MCF 10A (cell line): ENCODE measurements at regions of chr1 and their contacts with region 1.

Region 1: DNA sequence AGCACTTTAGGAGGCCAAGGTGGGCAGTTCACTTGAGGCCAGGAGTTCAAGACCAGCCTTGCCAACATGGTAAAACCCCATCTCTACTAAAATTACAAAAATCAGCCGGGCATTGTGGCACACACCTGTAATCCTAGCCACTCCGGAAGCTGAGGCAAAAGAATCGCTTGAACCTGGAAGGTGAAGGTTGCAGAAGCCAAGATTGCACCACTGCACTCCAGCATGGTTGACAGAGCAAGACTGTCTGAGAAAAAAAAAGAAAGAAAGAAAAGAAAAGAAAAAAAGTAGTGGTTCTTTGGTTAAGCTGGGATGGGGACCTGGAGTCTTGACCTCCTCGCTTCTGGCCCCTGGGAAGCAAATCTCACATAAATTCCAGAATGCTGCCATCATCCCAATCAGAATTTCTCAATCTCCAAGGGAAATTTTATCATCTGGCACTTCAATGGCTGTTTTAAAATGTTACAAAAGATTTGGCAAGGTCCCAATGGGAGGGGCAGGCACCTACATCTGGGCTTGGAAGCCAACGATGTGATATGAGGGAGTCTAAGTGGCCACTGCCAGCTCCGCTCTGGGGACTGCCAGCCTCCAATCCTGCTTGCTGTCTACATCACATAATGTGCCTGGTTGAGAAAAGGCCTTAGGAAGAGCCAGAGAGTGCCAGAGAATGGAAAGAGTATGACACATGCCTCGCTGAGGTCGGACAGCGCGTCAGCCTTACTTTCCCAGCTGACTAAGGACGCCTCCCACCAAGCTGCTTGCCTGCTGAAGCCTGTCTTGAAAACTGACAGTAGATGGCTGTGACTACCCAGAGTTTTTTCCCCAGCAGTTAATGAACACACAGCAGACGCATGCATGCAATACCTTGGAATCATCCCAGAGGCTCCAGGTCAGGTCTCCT is 42.1 kb upstream of the SRP9 start:
- DNase-seq: peak; percentile 100
- H3K4me3 Mint-ChIP-seq: peak overlapping the region; percentile 60
- H3K27ac Mint-ChIP-seq: peak overlapping the region; percentile 89
- H3K4me1 Mint-ChIP-seq: peaks cover 33% of the 10 kb centered on the region
- H3K27me3 Mint-ChIP-seq: no peaks in the 10 kb centered on the region
- CTCF ChIP-seq: peak; percentile 9

Region 2: GRCh38 chr1:225454733-225455132 is 280.8 kb before region 1 on chr1:
- CTCF ChIA-PET with region 1: no interaction called
- POLR2A ChIA-PET with region 1: interaction called, 14 read pairs
- intact Hi-C with region 1: no loop called
- DNase-seq: peak; percentile 96
- H3K4me3 Mint-ChIP-seq: peak overlapping the region; percentile 2
- H3K27ac Mint-ChIP-seq: peak overlapping the region; percentile 60
- H3K4me1 Mint-ChIP-seq: peaks cover 61% of the 10 kb centered on the region
- H3K27me3 Mint-ChIP-seq: no peaks in the 10 kb centered on the region
- CTCF ChIP-seq: no peak

Region 3: DNA sequence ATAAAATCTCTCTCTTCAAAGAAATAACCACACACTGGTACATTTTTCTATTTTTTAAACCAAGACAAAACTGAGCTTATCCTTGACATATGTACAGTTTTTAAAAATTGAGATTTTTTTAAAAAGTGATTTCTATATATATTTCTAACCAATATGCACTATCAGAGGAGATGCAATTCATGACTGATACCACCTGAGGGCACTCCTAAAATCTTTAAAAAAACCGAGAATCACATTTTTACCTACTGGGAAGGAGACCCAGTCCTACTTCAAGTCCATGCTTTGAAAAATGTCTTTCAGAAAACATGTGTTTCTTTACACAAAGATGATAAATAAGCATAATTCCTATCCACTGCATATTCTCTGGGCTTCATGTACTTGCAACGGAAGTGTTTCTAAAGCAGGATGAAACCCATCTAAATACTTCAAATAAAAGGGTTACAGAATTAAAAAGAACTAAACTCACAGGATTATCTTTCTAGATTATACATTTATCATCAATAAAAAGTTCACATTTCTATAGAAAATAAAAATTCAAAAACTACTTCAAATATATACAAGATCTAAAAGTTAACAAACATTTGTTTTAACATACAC is 181.2 kb before region 1 on chr1:
- CTCF ChIA-PET with region 1: interaction called, 5 read pairs
- POLR2A ChIA-PET with region 1: interaction called, 5 read pairs
- intact Hi-C with region 1: loop called (anchors 1 kb)
- DNase-seq: peak; percentile 67
- H3K4me3 Mint-ChIP-seq: no peak overlapping the region
- H3K27ac Mint-ChIP-seq: no peak overlapping the region
- H3K4me1 Mint-ChIP-seq: peaks cover 2% of the 10 kb centered on the region
- H3K27me3 Mint-ChIP-seq: no peaks in the 10 kb centered on the region
- CTCF ChIP-seq: peak; percentile 85

Region 4: GRCh38 chr1:225700164-225700740 is 35.2 kb before region 1 on chr1:
- CTCF ChIA-PET with region 1: interaction called, 7 read pairs
- POLR2A ChIA-PET with region 1: interaction called, 118 read pairs
- intact Hi-C with region 1: loop called (anchors 5 kb)
- DNase-seq: peak; percentile 100
- H3K4me3 Mint-ChIP-seq: peak overlapping the region; percentile 68
- H3K27ac Mint-ChIP-seq: peak overlapping the region; percentile 94
- H3K4me1 Mint-ChIP-seq: peaks cover 26% of the 10 kb centered on the region
- H3K27me3 Mint-ChIP-seq: no peaks in the 10 kb centered on the region
- CTCF ChIP-seq: no peak

Region 5: DNA sequence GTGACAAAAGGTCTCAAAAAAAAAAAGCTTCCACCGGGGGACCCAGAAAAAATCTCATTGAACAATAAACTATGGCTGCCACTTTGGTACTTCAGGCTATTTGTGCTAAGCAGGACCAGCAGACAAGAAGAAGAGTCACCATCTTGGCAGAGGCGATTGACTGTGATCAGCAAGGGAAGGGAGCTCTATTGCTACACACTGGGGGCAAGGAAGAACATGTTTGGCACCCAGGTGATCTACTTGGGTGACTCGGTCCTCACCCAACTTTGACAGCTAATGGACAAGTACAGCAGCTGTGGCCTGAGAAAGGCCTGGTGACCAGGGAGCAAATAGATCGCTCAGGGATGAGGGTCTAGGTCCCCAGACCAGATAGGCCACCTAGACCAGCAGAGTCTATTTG is 11.2 kb before region 1 on chr1:
- CTCF ChIA-PET with region 1: interaction called, 7 read pairs
- POLR2A ChIA-PET with region 1: interaction called, 12 read pairs
- intact Hi-C with region 1: no loop called
- DNase-seq: no peak
- H3K4me3 Mint-ChIP-seq: no peak overlapping the region
- H3K27ac Mint-ChIP-seq: no peak overlapping the region
- H3K4me1 Mint-ChIP-seq: no peaks in the 10 kb centered on the region
- H3K27me3 Mint-ChIP-seq: no peaks in the 10 kb centered on the region
- CTCF ChIP-seq: no peak

Region 6: DNA sequence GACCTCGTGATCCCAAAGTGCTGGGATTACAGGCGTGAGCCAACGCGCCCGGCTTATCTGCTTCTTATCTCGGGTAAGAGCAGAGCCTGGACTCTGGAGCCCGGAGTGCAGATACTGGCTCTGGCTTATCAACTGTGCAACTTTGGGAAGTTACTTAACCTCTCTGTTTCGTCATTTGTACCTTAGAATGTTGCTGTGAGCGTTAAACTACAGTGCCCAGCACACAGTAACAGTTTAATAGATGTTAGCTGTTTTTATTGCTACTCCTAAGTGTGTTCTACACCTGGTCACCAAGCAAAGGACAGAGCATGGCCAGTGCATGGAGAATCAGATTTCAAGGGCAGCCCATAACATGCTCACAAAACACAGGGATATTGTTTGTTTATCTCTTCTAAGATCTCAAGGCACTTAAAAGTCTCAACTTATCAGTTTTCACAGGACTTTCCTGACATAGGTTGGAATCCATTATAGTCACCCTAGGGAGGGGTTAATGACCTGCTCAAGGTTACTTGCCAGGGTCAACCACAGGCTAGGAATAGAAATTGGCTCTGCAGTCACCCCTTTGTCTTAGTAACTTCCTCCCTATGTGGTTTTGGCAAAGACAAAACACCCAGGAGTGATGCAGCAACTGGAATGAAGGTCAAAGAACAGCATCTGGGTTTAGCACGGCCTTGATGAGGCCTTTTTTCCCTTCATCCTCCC is 19.6 kb after region 1 on chr1:
- CTCF ChIA-PET with region 1: interaction called, 8 read pairs
- POLR2A ChIA-PET with region 1: interaction called, 162 read pairs
- intact Hi-C with region 1: no loop called
- DNase-seq: peak; percentile 93
- H3K4me3 Mint-ChIP-seq: no peak overlapping the region
- H3K27ac Mint-ChIP-seq: no peak overlapping the region
- H3K4me1 Mint-ChIP-seq: peaks cover 19% of the 10 kb centered on the region
- H3K27me3 Mint-ChIP-seq: no peaks in the 10 kb centered on the region
- CTCF ChIP-seq: no peak